ENCODE measurements at regions of chr7 and their contacts with region 1.

Region 1: DNA sequence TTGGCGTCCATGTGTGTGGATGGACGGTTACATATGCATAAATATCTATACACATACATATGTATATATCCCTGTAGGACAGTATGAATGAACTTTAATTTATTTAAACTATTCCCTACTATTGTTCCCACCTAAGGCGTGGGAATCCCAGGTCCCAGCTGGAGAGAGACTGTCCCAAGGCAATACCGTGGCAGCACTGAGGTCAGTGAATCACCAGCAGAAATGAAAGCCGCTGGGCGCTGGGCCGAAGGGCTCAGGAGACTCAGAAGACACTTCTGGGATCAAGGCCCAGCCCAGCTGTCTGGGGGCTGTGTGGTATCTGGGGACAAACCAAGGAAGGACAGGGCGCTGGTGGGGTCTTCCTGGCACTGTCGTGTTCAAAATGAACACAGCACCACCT is 49.6 kb upstream of the MYL10 start:
- DNase-seq: no peak
- H3K4me3 ChIP-seq: no peak overlapping the region
- H3K27ac ChIP-seq: no peak overlapping the region
- H3K4me1 ChIP-seq: peaks cover 0 to 7% (median 0%) of the 10 kb centered on the region in 4 donors
- H3K27me3 ChIP-seq: no peaks in the 10 kb centered on the region
- CTCF ChIP-seq: no peak
- EP300 ChIP-seq: no peak
- POLR2A ChIP-seq: no peak

Region 2: GRCh38 chr7:102244586-102244985 is 565.9 kb after region 1 on chr7:
- in situ Hi-C with region 1: loop called in 3 of 4 experiments (anchors 10 to 25 kb)
- intact Hi-C with region 1: loop called (anchors 5 kb)
- DNase-seq: no peak
- H3K4me3 ChIP-seq: no peak overlapping the region
- H3K27ac ChIP-seq: no peak overlapping the region
- H3K4me1 ChIP-seq: no peaks in the 10 kb centered on the region
- H3K27me3 ChIP-seq: no peaks in the 10 kb centered on the region
- CTCF ChIP-seq: no peak
- EP300 ChIP-seq: no peak
- POLR2A ChIP-seq: no peak

Region 3: DNA sequence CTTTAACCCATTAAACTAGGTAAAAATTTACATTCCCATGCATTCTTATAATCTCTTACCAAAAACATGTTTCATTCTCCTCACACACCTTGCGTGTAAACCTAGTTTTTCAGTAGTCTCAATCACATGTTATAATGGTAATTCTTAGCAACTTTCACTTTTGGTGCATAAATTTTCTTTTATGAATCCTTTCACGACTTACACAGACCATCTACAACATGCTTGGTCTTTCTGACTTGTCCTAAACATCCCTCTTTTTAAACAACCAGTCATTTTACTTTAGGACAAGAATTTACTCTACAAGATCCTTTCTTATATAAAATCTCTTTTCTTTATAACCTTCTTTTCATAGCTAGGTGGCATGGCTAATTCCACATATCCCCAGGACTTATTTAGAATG is 1370.2 kb after region 1 on chr7:
- in situ Hi-C with region 1: no loop called
- intact Hi-C with region 1: no loop called
- DNase-seq: no peak
- H3K4me3 ChIP-seq: no peak overlapping the region
- H3K27ac ChIP-seq: no peak overlapping the region
- H3K4me1 ChIP-seq: no peaks in the 10 kb centered on the region
- H3K27me3 ChIP-seq: no peaks in the 10 kb centered on the region
- CTCF ChIP-seq: no peak
- EP300 ChIP-seq: no peak
- POLR2A ChIP-seq: no peak